Calu3 (cell line): ENCODE measurements at regions of chr6 and their contacts with region 1.

Region 1: DNA sequence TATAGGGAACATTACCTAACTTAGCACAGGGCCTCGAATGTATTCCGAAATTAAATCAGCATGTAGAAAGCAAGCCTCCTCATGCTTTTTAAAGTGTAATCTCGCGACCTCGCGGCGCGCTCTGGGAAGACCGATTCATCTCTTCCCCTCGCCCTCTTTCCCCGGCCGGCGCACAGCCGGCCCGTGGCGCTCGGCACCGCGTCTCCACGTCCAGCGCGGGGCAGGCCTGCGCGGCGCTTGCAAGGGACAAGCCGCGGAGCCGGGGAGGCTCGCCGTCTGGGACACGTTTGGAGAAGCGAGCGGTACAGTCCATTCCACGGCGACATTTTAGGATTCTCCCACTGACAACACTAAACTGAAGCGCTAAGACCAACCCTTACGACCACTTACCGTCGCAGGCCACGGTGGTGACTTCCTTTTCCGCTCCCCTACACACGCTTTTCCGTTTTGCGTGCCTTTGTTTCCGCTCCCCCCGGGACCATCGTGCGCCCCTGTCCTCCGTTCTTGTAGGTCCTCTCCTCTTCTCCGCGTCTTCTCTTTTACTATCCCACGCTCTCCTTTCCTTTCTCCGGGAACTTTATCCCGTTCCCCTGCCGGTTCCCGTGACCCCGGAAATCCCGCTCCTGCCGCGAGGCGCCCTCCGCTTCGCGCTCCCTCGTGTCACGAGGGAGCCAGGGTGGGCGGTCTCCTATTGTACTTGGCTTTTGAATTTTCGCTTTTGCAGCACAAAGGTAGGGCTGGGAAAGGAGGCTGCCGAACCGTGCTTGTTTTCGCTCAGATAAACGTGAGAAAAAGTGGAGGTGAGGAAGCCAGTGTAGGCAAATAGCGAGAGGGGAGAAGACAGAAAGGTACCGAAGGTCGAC is at the start of gene ECHDC1:
- DNase-seq: peak; percentile 43
- H3K4me3 Mint-ChIP-seq: no peak within 1 kb of the TSS
- H3K27ac Mint-ChIP-seq: no peak within 1 kb of the TSS
- H3K4me1 Mint-ChIP-seq: no peaks in the 10 kb centered on the region
- H3K27me3 Mint-ChIP-seq: no peaks in the 10 kb centered on the region
- CTCF ChIP-seq: no peak
- total RNA-seq, gene ECHDC1: 30.3 and 42.5 TPM in 2 replicates

Region 2: DNA sequence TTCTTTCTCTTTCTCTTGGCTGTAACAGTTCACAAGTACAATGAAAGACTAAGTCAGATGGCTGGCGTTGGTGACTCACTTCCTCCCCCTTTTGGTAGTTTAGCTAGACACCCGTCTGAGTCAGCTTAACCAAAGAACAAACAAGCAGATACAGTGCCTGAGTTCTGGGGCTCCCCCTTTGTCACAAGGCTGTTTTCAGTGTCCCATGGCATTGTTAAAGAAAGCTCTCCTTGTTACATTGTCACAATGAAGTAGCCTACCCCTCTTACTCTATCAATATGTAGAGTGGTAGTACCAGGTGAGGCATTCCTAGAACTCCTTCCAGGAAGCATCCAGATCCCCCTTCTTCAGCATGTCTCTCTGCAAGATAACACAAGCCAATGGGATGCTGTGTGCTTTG is 77.4 kb after region 1 on chr6:
- CTCF ChIA-PET with region 1: interaction called, 6 read pairs
- intact Hi-C with region 1: loop called (anchors 5 kb)
- DNase-seq: peak; percentile 64
- H3K4me3 Mint-ChIP-seq: no peak overlapping the region
- H3K27ac Mint-ChIP-seq: peak overlapping the region; percentile 60
- H3K4me1 Mint-ChIP-seq: peaks cover 29% of the 10 kb centered on the region
- H3K27me3 Mint-ChIP-seq: no peaks in the 10 kb centered on the region
- CTCF ChIP-seq: no peak